Naive thymus-derived CD4-positive, alpha-beta T cell (primary cell): ENCODE measurements at regions of chr1 and their contacts with region 1.

Region 1: DNA sequence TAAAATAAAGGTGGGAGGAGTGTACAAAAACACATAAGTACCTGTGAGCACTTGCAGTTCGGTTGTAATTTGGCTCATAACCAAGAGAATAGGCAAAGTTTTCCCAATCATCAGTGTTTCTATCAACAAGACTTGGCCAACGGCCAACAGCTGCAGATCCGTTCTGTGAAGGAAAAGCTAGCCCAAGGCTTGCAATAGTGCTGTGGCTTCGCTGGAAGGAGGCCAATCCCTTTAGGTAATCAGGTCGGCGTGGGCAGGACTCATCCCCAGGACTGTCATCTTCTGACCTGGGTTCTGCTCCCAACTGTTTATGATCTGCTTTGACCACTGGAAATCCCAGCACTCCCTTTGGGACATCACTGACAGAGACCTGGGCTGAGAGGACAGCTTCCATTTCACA is 107.8 kb downstream of the LYST start:
- DNase-seq: no peak
- ATAC-seq: no peak
- H3K4me3 ChIP-seq: no peak overlapping the region
- H3K4me3 Mint-ChIP-seq: no peak overlapping the region
- H3K27ac ChIP-seq: no peak overlapping the region
- H3K27ac Mint-ChIP-seq: no peak overlapping the region
- H3K4me1 ChIP-seq: no peaks in the 10 kb centered on the region
- H3K4me1 Mint-ChIP-seq: no peaks in the 10 kb centered on the region
- H3K27me3 ChIP-seq: no peaks in the 10 kb centered on the region
- H3K27me3 Mint-ChIP-seq: no peaks in the 10 kb centered on the region

Region 2: GRCh38 chr1:235588916-235589515 is 169.9 kb before region 1 on chr1:
- CTCF ChIA-PET with region 1: no interaction called
- POLR2A ChIA-PET with region 1: no interaction called
- intact Hi-C with region 1: no loop called
- DNase-seq: peak in 2 of 9 donors; percentile 0 to 12
- ATAC-seq: no peak
- H3K4me3 ChIP-seq: no peak overlapping the region
- H3K4me3 Mint-ChIP-seq: peak overlapping the region in 1 of 10 donors; percentile 77
- H3K27ac ChIP-seq: no peak overlapping the region
- H3K27ac Mint-ChIP-seq: no peak overlapping the region
- H3K4me1 ChIP-seq: no peaks in the 10 kb centered on the region
- H3K4me1 Mint-ChIP-seq: peaks cover 0 to 9% (median 6%) of the 10 kb centered on the region in 7 donors
- H3K27me3 ChIP-seq: no peaks in the 10 kb centered on the region
- H3K27me3 Mint-ChIP-seq: peaks cover 25 to 47% (median 36%) of the 10 kb centered on the region in 5 donors

Region 3: GRCh38 chr1:235697508-235697907 is 61.4 kb before region 1 on chr1:
- CTCF ChIA-PET with region 1: no interaction called
- POLR2A ChIA-PET with region 1: no interaction called
- intact Hi-C with region 1: loop called in 1 of 2 experiments (anchors 10 kb)
- DNase-seq: no peak
- ATAC-seq: peak; percentile 69
- H3K4me3 ChIP-seq: no peak overlapping the region
- H3K4me3 Mint-ChIP-seq: peak overlapping the region in 1 of 10 donors; percentile 1
- H3K27ac ChIP-seq: no peak overlapping the region
- H3K27ac Mint-ChIP-seq: peak overlapping the region in 1 of 9 donors; percentile 1
- H3K4me1 ChIP-seq: no peaks in the 10 kb centered on the region
- H3K4me1 Mint-ChIP-seq: peaks cover 0 to 17% (median 0%) of the 10 kb centered on the region in 7 donors
- H3K27me3 ChIP-seq: no peaks in the 10 kb centered on the region
- H3K27me3 Mint-ChIP-seq: no peaks in the 10 kb centered on the region